ENCODE measurements at regions of chr1 and their contacts with region 1.

Region 1: GRCh38 chr1:101257500-101258325 is 20.9 kb downstream of the S1PR1 start:
- DNase-seq: peak; percentile 72 to 76
- H3K4me3 ChIP-seq: no peak overlapping the region
- H3K27ac ChIP-seq: peak overlapping the region; percentile 84
- H3K4me1 ChIP-seq: peaks cover 58% of the 10 kb centered on the region
- H3K27me3 ChIP-seq: no peaks in the 10 kb centered on the region
- CTCF ChIP-seq: no peak

Region 2: DNA sequence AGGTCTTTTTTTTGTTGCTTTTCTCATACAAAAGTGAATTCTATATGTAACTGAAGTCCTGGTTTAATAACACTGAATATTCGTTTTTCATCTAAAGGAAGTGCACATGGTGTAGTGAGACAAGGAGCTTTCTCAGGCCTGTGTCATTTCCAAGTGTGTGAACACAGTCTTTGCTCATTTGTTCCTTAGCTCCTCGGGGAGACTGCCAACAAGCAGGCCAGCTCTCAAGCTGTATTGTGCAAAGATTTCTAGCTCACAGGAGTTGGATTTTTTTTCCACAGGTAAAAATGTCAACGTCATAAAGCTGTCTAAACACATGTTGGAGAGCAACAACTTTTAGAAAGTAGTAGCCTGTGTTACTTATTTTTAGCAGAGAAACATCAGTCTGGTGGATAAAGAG is 108.7 kb before region 1 on chr1:
- CTCF ChIA-PET with region 1: no interaction called
- POLR2A ChIA-PET with region 1: no interaction called
- intact Hi-C with region 1: no loop called
- DNase-seq: peak in 1 of 2 experiments; percentile 26
- H3K4me3 ChIP-seq: no peak overlapping the region
- H3K27ac ChIP-seq: no peak overlapping the region
- H3K4me1 ChIP-seq: peaks cover 14% of the 10 kb centered on the region
- H3K27me3 ChIP-seq: no peaks in the 10 kb centered on the region
- CTCF ChIP-seq: no peak

Region 3: DNA sequence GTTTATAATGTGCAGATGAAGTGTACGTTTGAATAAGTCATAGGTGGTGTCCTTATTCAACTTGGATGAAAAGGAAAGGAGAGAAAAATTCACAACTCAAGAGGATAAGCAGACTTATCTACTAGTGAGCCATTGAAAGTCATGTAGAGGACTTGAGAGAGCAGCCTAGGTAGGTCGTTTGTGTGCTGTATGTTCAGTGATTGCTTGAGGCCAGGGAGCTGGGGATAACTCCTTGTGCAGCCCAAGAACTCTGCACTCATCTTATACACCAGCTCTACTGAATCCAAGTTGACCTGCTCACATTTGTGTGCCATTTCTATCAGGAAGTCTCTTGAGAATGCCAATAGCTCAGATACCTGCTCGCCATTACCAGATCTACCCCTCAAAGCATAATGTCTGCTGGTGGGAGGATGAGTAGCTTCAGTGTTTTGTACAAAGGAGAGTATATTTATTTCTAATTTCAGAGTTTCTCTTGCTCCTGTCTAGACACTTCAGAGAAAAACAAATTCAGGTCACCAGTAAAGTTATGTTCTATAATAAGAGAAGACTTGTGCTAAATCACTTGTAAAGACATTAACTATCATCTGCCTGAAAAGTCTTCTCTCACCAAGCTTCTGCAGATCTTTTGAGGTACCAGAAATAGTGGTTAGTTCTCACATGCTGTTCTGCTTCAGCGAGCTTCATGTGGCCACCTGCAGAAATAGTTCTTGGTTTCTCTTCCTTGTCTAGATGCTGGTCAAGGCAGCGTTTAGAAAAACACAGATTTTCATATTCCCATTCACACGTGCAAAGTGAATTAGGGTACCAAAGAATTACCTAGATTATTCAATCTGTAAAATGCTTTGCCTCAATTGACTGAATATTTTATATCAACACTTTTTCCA is 10.1 kb before region 1 on chr1:
- CTCF ChIA-PET with region 1: interaction called, 18 read pairs
- POLR2A ChIA-PET with region 1: no interaction called
- intact Hi-C with region 1: no loop called
- DNase-seq: no peak
- H3K4me3 ChIP-seq: no peak overlapping the region
- H3K27ac ChIP-seq: no peak overlapping the region
- H3K4me1 ChIP-seq: no peaks in the 10 kb centered on the region
- H3K27me3 ChIP-seq: no peaks in the 10 kb centered on the region
- CTCF ChIP-seq: no peak

Region 4: DNA sequence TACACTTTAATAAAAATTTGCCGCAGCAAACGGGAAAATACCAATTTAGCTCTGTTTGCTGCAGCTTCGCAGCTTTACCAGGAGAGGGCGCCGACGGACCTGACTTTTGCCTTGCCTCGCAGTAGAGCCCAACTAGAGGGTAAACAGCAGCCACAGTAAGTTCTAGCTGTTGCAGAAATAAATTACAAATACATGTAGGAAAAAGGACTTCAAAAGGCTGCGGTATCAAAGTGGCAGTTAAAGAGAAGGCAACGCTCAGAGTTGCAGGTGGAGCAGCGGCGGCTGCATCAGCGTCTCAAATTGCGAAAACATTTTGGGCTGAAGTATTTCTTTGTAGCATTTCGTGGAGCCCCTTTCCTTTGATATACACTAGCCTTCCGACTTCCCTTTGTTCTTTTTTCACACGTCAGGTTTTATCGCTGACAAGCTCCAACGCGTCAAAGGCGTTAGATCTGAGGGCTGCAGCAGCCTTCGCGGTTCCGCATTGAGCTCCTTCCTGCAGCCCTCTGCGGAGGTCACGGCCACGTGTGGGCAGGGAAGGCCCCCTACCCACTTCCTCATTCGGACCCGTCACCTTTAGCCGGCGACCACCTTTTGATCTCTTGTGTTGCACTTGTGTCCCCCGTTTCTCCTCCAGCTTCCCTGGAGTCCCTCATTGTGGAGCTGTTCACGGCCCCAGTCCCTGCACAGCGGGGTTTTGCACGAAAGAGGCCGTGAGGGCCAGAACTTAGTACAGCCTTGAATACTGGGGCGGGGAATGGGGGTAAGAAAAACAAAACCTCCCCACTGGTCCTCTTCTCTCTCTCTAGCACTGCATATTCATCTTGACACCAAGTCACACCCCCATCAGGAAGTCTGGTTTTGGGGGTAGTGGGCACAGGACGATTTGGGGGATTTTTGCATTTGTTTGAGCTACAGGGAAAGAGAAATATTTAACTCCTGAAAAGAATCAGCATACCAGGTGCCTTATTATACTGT is 51.9 kb after region 1 on chr1:
- CTCF ChIA-PET with region 1: no interaction called
- POLR2A ChIA-PET with region 1: interaction called, 21 read pairs
- intact Hi-C with region 1: no loop called
- DNase-seq: peak; percentile 25 to 51
- H3K4me3 ChIP-seq: no peak overlapping the region
- H3K27ac ChIP-seq: no peak overlapping the region
- H3K4me1 ChIP-seq: no peaks in the 10 kb centered on the region
- H3K27me3 ChIP-seq: peaks cover 49% of the 10 kb centered on the region; the same call in 1 of the 2 replicates
- CTCF ChIP-seq: peak; percentile 97

Region 5: GRCh38 chr1:101379950-101380349 is 122.2 kb after region 1 on chr1:
- CTCF ChIA-PET with region 1: no interaction called
- POLR2A ChIA-PET with region 1: no interaction called
- intact Hi-C with region 1: no loop called
- DNase-seq: no peak
- H3K4me3 ChIP-seq: no peak overlapping the region
- H3K27ac ChIP-seq: no peak overlapping the region
- H3K4me1 ChIP-seq: no peaks in the 10 kb centered on the region
- H3K27me3 ChIP-seq: no peaks in the 10 kb centered on the region
- CTCF ChIP-seq: no peak

Region 6: GRCh38 chr1:101618900-101619299 is 361.2 kb after region 1 on chr1:
- CTCF ChIA-PET with region 1: no interaction called
- POLR2A ChIA-PET with region 1: no interaction called
- intact Hi-C with region 1: no loop called
- DNase-seq: no peak
- H3K4me3 ChIP-seq: no peak overlapping the region
- H3K27ac ChIP-seq: no peak overlapping the region
- H3K4me1 ChIP-seq: no peaks in the 10 kb centered on the region
- H3K27me3 ChIP-seq: no peaks in the 10 kb centered on the region
- CTCF ChIP-seq: no peak

Region 7: GRCh38 chr1:102252731-102253505 is 995.2 kb after region 1 on chr1:
- CTCF ChIA-PET with region 1: no interaction called
- POLR2A ChIA-PET with region 1: no interaction called
- intact Hi-C with region 1: no loop called
- DNase-seq: no peak
- H3K4me3 ChIP-seq: no peak overlapping the region
- H3K27ac ChIP-seq: no peak overlapping the region
- H3K4me1 ChIP-seq: no peaks in the 10 kb centered on the region
- H3K27me3 ChIP-seq: no peaks in the 10 kb centered on the region
- CTCF ChIP-seq: no peak

Measured in PC-9 (cell line).